Kidney (tissue), 22 donors: ENCODE measurements at regions of chr4 and their contacts with region 1.

Region 1: DNA sequence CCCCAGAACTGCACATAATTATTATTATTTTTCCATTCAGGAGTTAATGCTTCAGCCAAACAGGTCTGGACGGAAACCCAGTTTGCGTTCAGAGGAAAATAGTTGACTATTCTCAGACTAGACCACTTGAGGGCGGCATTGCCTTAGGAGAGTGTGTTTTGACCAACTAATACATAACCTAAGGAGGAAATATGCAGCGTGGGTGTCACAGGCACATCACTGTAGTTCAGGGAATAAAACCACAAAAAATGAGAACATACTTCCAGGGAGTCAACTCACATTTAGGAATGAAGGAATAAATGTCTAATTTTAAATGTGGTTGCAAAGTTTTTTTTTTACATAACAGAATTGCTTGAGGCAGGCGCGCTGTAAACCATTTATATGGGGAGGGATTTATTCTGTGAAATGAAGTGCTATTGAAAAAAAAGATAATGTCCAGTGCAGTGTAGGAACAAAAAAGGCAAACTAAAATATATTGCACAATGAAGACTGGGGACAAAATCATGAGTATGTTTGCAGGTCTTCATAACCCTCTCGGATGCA is 93.3 kb downstream of the SYNPO2 start:
- DNase-seq: peak in 4 of 5 donors; percentile 49 to 86 (median 66)
- H3K4me3 ChIP-seq: no peak overlapping the region
- H3K27ac ChIP-seq: no peak overlapping the region
- H3K4me1 ChIP-seq: no peaks in the 10 kb centered on the region
- H3K27me3 ChIP-seq: no peaks in the 10 kb centered on the region
- CTCF ChIP-seq: peak; percentile 84

Region 2: GRCh38 chr4:119286377-119287002 is 304.6 kb after region 1 on chr4:
- intact Hi-C with region 1: loop called (anchors 10 kb)
- DNase-seq: peak in 2 of 5 donors; percentile 61 to 79
- H3K4me3 ChIP-seq: no peak overlapping the region
- H3K27ac ChIP-seq: no peak overlapping the region
- H3K4me1 ChIP-seq: peaks cover 0 to 2% (median 1%) of the 10 kb centered on the region in 3 donors
- H3K27me3 ChIP-seq: no peaks in the 10 kb centered on the region
- CTCF ChIP-seq: peak; percentile 62